CD4-positive, alpha-beta memory T cell (primary cell): ENCODE measurements at regions of chr3 and their contacts with region 1.

Region 1: DNA sequence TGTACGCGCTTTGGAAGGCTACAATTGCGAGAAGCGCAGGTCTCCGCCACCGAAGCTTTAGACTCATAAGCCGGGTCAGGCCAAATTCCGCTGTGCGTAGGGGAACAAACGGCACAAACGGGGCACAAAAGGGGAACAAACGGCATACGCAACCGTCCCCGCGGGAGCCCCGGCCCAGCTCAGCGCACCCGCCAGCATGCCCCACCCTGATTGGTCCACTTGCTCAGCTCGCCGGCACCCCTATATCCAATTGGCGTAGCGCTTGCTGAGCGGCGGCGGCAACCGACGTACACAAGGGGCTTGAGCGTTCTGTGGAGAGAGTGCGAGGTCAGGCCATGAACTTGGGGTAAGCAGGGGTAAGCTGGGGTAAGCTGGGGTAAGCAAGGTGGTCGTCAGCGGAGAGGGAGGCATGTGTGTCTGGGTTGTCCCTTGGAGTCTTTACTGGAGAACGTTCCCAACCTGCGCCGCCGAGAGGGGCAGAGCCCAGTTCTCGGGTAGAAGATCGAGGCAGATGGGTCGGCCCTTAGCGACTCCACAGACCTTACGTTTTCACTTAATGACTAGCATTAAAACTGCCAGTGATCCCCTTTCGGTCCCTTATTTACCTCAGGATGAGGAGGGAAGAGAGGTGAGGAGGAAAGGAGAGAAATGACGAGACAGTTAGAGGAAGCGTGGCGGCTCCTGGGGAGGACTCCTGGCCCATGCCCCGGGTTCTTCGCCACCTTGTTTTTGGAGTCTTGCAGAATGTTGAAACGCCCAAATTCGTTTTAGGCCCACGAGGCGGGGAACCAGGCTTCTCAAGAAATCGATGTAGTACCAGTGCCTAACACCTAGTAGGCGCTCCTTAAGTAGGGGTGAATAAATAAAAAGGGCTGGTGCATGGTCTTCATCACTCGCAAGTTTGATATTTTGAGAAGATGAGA is at the start of gene CCDC66:
- DNase-seq: peak; percentile 92 to 95 (median 93)
- H3K4me3 ChIP-seq: peak within 1 kb of the TSS; percentile 90 to 91
- H3K4me3 Mint-ChIP-seq: peak within 1 kb of the TSS; percentile 95 to 100 (median 99)
- H3K27ac ChIP-seq: peak within 1 kb of the TSS; percentile 91
- H3K27ac Mint-ChIP-seq: peak within 1 kb of the TSS; percentile 98 to 100 (median 99)
- H3K4me1 ChIP-seq: peaks cover 24% of the 10 kb centered on the region
- H3K4me1 Mint-ChIP-seq: peaks cover 15 to 42% (median 29%) of the 10 kb centered on the region in 4 donors
- H3K27me3 ChIP-seq: no peaks in the 10 kb centered on the region
- H3K27me3 Mint-ChIP-seq: no peaks in the 10 kb centered on the region
- total RNA-seq, gene CCDC66: 93.4 to 104 TPM

Region 2: GRCh38 chr3:56339244-56339643 is 217.9 kb before region 1 on chr3:
- CTCF ChIA-PET with region 1: no interaction called
- POLR2A ChIA-PET with region 1: no interaction called
- intact Hi-C with region 1: no loop called
- DNase-seq: no peak
- H3K4me3 ChIP-seq: no peak overlapping the region
- H3K4me3 Mint-ChIP-seq: no peak overlapping the region
- H3K27ac ChIP-seq: no peak overlapping the region
- H3K27ac Mint-ChIP-seq: peak overlapping the region in 1 of 7 donors; percentile 2
- H3K4me1 ChIP-seq: no peaks in the 10 kb centered on the region
- H3K4me1 Mint-ChIP-seq: no peaks in the 10 kb centered on the region
- H3K27me3 ChIP-seq: no peaks in the 10 kb centered on the region
- H3K27me3 Mint-ChIP-seq: peaks cover 3 to 4% of the 10 kb centered on the region in 2 donors

Region 3: GRCh38 chr3:56467108-56467507 is 90.1 kb before region 1 on chr3:
- CTCF ChIA-PET with region 1: no interaction called
- POLR2A ChIA-PET with region 1: no interaction called
- intact Hi-C with region 1: no loop called
- DNase-seq: peak; percentile 7 to 48 (median 20)
- H3K4me3 ChIP-seq: no peak overlapping the region
- H3K4me3 Mint-ChIP-seq: peak overlapping the region; percentile 56 to 82 (median 72)
- H3K27ac ChIP-seq: no peak overlapping the region
- H3K27ac Mint-ChIP-seq: no peak overlapping the region
- H3K4me1 ChIP-seq: peaks cover 10% of the 10 kb centered on the region
- H3K4me1 Mint-ChIP-seq: peaks cover 5 to 20% (median 13%) of the 10 kb centered on the region in 4 donors
- H3K27me3 ChIP-seq: peaks cover 16% of the 10 kb centered on the region
- H3K27me3 Mint-ChIP-seq: peaks cover 47 to 58% of the 10 kb centered on the region in 2 donors

Region 4: GRCh38 chr3:56502738-56503137 is 54.4 kb before region 1 on chr3:
- CTCF ChIA-PET with region 1: no interaction called
- POLR2A ChIA-PET with region 1: no interaction called
- intact Hi-C with region 1: no loop called
- DNase-seq: no peak
- H3K4me3 ChIP-seq: no peak overlapping the region
- H3K4me3 Mint-ChIP-seq: no peak overlapping the region
- H3K27ac ChIP-seq: no peak overlapping the region
- H3K27ac Mint-ChIP-seq: no peak overlapping the region
- H3K4me1 ChIP-seq: no peaks in the 10 kb centered on the region
- H3K4me1 Mint-ChIP-seq: no peaks in the 10 kb centered on the region
- H3K27me3 ChIP-seq: no peaks in the 10 kb centered on the region
- H3K27me3 Mint-ChIP-seq: peaks cover 16 to 27% of the 10 kb centered on the region in 2 donors

Region 5: GRCh38 chr3:56593455-56594158 is 36.4 kb after region 1 on chr3:
- CTCF ChIA-PET with region 1: interaction called, 9 read pairs
- POLR2A ChIA-PET with region 1: interaction called, 63 read pairs
- intact Hi-C with region 1: loop called (anchors 1 kb)
- DNase-seq: peak; percentile 72 to 79 (median 78)
- H3K4me3 ChIP-seq: peak overlapping the region; percentile 18 to 23
- H3K4me3 Mint-ChIP-seq: peak overlapping the region; percentile 63 to 89 (median 80)
- H3K27ac ChIP-seq: peak overlapping the region; percentile 56
- H3K27ac Mint-ChIP-seq: peak overlapping the region; percentile 88 to 98 (median 96)
- H3K4me1 ChIP-seq: peaks cover 74% of the 10 kb centered on the region
- H3K4me1 Mint-ChIP-seq: peaks cover 53 to 79% (median 63%) of the 10 kb centered on the region in 4 donors
- H3K27me3 ChIP-seq: no peaks in the 10 kb centered on the region
- H3K27me3 Mint-ChIP-seq: no peaks in the 10 kb centered on the region

Region 6: DNA sequence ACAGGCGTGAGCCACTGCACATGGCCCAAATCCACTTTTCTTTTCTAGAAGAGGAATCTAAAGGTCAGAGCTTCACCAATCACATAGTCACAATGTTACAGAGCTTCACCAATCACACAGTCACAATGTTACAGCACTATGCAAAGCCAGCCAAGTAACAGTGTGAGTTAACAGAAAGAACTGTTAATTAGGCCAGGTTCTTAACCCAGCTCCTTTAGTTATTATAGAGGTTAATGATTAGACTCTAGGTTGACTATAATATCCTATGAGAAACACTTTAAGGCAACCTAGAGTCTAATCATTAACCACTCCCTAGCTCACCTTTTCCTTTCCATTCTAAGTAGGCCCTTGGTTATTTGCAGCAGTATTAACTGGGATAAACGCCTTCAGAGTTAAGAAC is 71.9 kb after region 1 on chr3:
- CTCF ChIA-PET with region 1: interaction called, 5 read pairs
- POLR2A ChIA-PET with region 1: interaction called, 16 read pairs
- intact Hi-C with region 1: loop called (anchors 2 kb)
- DNase-seq: no peak
- H3K4me3 ChIP-seq: no peak overlapping the region
- H3K4me3 Mint-ChIP-seq: no peak overlapping the region
- H3K27ac ChIP-seq: no peak overlapping the region
- H3K27ac Mint-ChIP-seq: peak overlapping the region; percentile 57 to 81 (median 78)
- H3K4me1 ChIP-seq: no peaks in the 10 kb centered on the region
- H3K4me1 Mint-ChIP-seq: peaks cover 0 to 12% (median 5%) of the 10 kb centered on the region in 4 donors
- H3K27me3 ChIP-seq: no peaks in the 10 kb centered on the region
- H3K27me3 Mint-ChIP-seq: no peaks in the 10 kb centered on the region

Region 7: DNA sequence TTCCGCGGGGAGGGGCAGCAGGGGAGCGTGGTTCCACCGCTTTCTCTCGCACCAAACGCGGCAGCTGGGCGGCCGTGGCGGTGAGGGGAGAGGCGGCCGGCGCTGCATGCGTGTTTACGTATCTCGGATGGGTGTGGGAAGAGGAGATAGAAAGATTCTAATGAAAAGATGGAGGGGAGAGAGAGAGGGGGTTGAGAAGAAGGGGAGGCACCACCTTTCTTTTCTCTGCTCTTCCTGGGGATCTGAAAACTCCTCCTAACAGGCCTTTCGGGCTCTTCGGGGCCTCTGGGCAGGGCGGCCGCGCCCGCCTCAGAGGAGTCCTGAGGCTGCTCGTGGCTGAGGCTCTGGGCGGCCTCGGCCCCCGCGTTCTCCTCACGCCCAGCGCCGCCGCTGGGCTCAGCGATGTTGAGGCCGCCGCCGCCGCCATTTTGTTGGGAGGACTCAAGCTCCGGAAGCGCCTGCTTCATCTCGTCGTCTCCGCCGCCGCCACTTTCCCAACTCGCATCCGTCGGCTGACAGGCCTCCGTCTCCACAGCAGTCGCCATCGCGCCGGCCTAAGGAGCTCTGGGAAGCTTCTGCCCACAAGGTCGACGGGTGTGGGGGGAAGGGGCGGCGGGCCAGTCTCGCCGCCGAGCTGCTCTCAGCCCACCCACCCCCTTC is 125.4 kb after region 1 on chr3:
- CTCF ChIA-PET with region 1: interaction called, 6 read pairs
- POLR2A ChIA-PET with region 1: interaction called, 36 read pairs
- intact Hi-C with region 1: loop called (anchors 1 kb)
- DNase-seq: peak; percentile 79 to 86 (median 85)
- H3K4me3 ChIP-seq: peak overlapping the region; percentile 76 to 90
- H3K4me3 Mint-ChIP-seq: peak overlapping the region; percentile 91 to 98 (median 94)
- H3K27ac ChIP-seq: peak overlapping the region; percentile 96
- H3K27ac Mint-ChIP-seq: peak overlapping the region; percentile 93 to 98 (median 96)
- H3K4me1 ChIP-seq: peaks cover 55% of the 10 kb centered on the region
- H3K4me1 Mint-ChIP-seq: peaks cover 28 to 59% (median 42%) of the 10 kb centered on the region in 4 donors
- H3K27me3 ChIP-seq: no peaks in the 10 kb centered on the region
- H3K27me3 Mint-ChIP-seq: no peaks in the 10 kb centered on the region

Region 8: DNA sequence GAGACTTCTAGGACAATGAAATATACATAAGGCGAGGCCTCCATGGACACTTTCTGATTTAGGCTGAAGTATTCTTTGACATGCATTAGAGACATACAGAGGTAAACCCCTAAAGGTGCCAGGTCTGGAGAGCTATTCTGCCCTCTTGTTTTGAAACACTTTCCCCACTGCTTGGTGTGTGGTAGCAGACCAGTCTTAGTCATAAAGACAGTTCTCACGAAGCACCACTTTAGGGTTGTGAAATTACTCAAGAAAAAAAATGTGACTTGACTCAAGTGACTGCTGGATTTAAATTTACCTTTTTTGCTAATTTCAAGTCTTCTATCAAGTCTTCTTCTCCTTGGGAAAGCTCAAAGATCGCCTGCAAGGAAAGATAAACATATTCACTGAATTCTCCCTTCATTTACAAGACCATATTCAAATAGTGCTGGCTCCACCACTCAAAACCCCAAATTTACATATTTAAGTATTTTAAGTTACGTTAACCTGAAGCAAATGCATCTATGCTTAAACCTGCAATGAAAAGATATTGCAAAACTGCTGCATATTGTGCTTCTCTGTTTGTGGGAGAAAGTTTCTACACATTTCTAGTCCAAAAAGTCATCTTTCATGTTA is 196.1 kb after region 1 on chr3:
- CTCF ChIA-PET with region 1: no interaction called
- POLR2A ChIA-PET with region 1: interaction called, 12 read pairs
- intact Hi-C with region 1: no loop called
- DNase-seq: peak in 1 of 5 donors; percentile 33
- H3K4me3 ChIP-seq: no peak overlapping the region
- H3K4me3 Mint-ChIP-seq: peak overlapping the region in 6 of 8 donors; percentile 1 to 96 (median 76)
- H3K27ac ChIP-seq: peak overlapping the region; percentile 22
- H3K27ac Mint-ChIP-seq: peak overlapping the region; percentile 42 to 97 (median 76)
- H3K4me1 ChIP-seq: peaks cover 62% of the 10 kb centered on the region
- H3K4me1 Mint-ChIP-seq: peaks cover 43 to 68% (median 54%) of the 10 kb centered on the region in 4 donors
- H3K27me3 ChIP-seq: no peaks in the 10 kb centered on the region
- H3K27me3 Mint-ChIP-seq: no peaks in the 10 kb centered on the region